Activated naive CD4-positive, alpha-beta T cell treated with anti-CD3 and anti-CD28 coated beads for 36 hours (primary cell): ENCODE measurements at regions of chr4 and their contacts with region 1.

Region 1: DNA sequence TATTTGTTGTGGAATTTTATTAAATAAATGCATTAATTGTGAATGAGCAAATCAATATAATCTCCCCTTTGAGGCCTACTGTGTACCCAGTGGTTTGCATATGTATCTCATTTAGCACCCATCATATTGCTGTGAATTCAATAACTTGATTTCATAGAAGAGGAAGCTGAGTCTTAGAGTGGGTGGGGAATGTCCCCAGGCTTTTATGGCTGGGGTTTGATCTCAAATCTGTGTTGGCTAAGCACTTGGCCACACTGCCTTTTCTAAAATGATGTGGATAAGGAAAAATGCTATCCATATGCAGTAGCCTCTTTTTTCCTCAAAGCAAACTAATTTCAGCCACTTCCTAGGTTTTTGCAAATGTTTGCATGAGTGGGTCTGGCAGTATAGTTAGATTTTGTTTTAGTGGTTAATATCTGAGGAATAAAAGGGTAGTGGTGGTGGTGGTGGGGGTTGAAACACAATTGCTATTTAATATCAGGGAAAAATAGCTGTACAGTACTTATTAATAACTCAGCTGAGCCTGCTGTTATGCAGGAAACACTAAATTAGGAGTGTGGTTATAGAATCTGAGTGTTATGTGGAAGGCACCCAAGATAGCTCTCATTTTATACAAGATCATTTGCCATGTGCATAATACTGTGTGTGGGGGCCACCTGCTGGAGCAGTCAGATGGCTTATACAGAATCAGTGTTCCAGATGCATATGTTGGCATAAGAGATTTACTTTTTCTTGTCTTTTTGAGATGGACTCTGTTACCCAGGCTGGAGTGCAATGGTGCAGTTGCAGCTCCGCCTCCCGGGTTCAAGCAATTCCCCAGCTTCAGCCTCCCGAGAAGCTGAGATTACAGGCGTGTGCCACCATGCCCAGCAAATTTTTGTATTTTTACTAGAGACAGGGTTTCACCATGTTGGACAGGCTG is 108.0 kb downstream of the TMEM131L start:
- DNase-seq: peak; percentile 78
- H3K4me3 Mint-ChIP-seq: no peak overlapping the region
- H3K27ac Mint-ChIP-seq: peak overlapping the region; percentile 74
- H3K4me1 Mint-ChIP-seq: peaks cover 76% of the 10 kb centered on the region
- H3K27me3 Mint-ChIP-seq: no peaks in the 10 kb centered on the region

Region 2: GRCh38 chr4:153541456-153542096 is 32.6 kb before region 1 on chr4:
- CTCF ChIA-PET with region 1: interaction called, 15 read pairs
- intact Hi-C with region 1: loop called (anchors 1 kb)
- DNase-seq: peak; percentile 54
- H3K4me3 Mint-ChIP-seq: no peak overlapping the region
- H3K27ac Mint-ChIP-seq: peak overlapping the region; percentile 27
- H3K4me1 Mint-ChIP-seq: peaks cover 78% of the 10 kb centered on the region
- H3K27me3 Mint-ChIP-seq: no peaks in the 10 kb centered on the region

Region 3: DNA sequence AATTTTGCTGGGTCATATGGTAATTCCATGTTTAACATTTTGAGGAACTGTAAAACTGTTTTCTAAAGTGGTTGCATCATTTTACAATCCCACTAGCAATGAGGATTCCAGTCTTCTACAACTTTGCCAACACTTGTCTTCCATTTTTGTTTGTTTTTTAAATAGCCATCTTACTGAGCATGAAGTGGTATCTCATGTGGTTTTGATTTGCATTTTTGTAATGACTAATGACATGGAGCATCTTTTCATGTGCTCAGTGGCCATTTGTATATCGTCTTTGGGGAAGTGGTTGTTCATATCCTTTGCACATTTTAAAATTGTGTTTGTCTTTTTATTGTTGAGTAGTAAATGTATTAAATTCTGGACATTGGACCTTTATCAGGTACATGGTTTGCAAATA is 13.2 kb before region 1 on chr4:
- CTCF ChIA-PET with region 1: interaction called, 3 read pairs
- intact Hi-C with region 1: loop called (anchors 1 kb)
- DNase-seq: no peak
- H3K4me3 Mint-ChIP-seq: no peak overlapping the region
- H3K27ac Mint-ChIP-seq: peak overlapping the region; percentile 42
- H3K4me1 Mint-ChIP-seq: peaks cover 48% of the 10 kb centered on the region
- H3K27me3 Mint-ChIP-seq: no peaks in the 10 kb centered on the region

Region 4: DNA sequence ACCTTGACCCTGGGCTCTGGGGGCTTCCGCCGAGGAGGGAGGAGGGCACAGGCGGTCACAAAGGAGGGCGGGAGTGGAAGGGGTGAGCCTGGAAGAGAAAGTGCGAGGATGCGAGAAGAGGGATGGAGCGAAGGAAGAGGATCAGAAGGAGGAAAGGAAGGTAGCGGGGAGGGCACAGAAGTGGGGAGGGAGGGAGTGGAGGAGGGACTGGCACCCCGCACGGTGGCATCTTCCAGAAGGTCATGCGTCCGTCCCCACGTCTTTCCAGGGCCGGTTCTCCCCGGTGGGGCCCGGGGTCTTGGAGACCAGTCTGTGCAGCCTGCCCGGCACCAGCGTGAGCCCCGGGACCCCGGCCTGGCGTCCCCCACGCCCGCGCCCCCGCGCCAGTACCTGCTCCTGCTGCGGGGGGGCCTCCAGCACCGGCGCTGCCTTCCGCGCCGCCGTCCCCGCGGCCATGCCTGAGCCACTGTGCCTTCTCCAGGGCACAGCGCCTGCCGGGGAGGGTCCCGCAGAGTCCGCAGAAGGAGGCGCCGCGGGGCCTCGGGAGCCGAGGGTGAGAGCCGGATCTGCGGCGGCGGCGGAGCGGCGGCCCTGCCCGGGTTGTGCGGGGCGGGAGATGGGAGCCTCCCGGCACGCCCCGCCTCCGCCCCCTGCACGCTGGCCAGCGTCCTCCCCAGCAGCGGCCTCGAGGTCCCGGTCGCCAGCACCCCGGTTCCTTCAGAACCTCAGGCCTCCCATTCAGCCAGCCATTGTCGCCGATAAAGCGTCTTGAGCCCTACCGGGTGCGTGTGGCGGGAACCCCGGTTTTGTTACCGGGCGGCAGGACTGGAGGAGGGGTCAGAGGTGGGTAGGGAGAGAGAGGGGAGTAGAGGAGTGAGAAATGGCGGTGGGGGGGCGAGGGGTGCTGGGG is 185.5 kb after region 1 on chr4 and contains the start of gene RNF175:
- CTCF ChIA-PET with region 1: no interaction called
- intact Hi-C with region 1: no loop called
- DNase-seq: peak; percentile 43
- H3K4me3 Mint-ChIP-seq: peak within 1 kb of the TSS; percentile 65
- H3K27ac Mint-ChIP-seq: no peak within 1 kb of the TSS
- H3K4me1 Mint-ChIP-seq: peaks cover 42% of the 10 kb centered on the region
- H3K27me3 Mint-ChIP-seq: no peaks in the 10 kb centered on the region
- total RNA-seq, gene RNF175: 1.4 to 1.5 TPM

Region 5: DNA sequence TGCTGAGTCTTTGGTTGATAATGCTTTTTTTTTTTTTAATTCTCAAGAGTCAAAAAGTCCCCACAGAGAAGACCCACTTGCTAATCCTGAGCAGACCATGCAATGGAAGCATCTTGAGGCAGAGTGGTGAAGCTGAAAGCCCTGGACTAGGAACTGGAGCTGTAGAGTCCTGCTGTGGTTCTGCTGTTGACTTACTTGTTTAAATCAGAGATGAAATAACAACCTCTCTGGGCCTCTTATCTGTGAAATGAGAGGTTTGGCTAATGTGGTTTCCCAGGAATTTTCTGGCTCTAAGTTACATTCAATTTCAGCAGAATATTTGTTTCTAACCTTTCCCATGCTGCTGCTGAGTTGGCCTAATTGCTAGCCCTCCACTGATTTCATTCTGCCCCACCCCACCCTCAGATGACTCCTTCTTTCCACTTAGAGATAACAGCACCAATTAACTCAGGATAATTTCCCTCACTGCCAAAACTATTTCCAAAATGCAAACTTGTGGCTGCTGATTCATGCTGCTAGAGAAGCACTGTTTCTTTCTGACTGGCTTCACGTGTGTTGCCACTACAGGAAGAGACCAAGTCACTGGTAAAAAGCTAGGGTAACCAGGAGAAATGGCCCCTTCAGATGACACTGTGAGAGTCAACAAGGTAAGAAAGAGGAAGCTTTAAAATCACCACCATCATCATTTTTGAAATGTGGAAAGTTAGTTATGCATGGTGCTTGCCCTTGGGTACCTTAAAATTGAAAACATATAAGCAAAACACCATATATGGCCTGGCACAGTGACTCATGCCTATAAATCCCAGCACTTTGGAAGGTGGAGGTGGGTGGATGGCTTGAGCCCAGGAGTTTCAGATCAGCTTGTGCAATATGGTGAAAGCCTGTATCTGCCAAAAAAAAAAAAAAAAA is 591.0 kb after region 1 on chr4:
- CTCF ChIA-PET with region 1: no interaction called
- intact Hi-C with region 1: no loop called
- DNase-seq: peak; percentile 66
- H3K4me3 Mint-ChIP-seq: no peak overlapping the region
- H3K27ac Mint-ChIP-seq: peak overlapping the region; percentile 48
- H3K4me1 Mint-ChIP-seq: peaks cover 15% of the 10 kb centered on the region
- H3K27me3 Mint-ChIP-seq: peaks cover 13% of the 10 kb centered on the region